Esophagus squamous epithelium (tissue), 5 donors: ENCODE measurements at regions of chr22 and their contacts with region 1.

Region 1: DNA sequence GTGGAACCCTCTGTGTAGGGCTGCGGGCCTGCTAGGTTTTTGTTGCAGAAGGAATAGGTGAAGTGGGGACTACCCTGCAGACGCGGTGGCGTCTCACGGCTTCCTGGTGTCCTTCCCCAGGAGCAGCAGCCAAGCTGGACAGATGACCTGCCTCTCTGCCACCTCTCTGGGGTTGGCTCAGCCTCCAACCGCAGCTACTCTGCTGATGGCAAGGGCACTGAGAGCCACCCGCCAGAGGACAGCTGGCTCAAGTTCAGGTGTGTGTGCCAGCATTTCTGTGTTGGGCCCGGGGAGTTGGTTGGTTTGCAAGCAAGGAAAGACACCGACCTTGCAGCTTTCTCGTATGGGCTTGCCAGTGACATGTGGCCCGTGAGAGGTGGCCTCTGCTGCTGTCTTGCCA is 15.3 kb downstream of the TAB1 start:
- DNase-seq: no peak
- H3K4me3 ChIP-seq: no peak overlapping the region
- H3K27ac ChIP-seq: no peak overlapping the region
- H3K4me1 ChIP-seq: peaks cover 4 to 32% (median 4%) of the 10 kb centered on the region in 3 donors
- H3K27me3 ChIP-seq: no peaks in the 10 kb centered on the region
- CTCF ChIP-seq: no peak
- POLR2A ChIP-seq: no peak

Region 2: GRCh38 chr22:39946503-39947219 is 531.8 kb after region 1 on chr22:
- intact Hi-C with region 1: no loop called
- DNase-seq: no peak
- H3K4me3 ChIP-seq: no peak overlapping the region
- H3K27ac ChIP-seq: peak overlapping the region in 1 of 4 donors; percentile 21
- H3K4me1 ChIP-seq: peaks cover 0 to 8% (median 0%) of the 10 kb centered on the region in 3 donors
- H3K27me3 ChIP-seq: peaks cover 0 to 4% (median 0%) of the 10 kb centered on the region in 4 donors
- CTCF ChIP-seq: no peak
- POLR2A ChIP-seq: no peak

Region 3: DNA sequence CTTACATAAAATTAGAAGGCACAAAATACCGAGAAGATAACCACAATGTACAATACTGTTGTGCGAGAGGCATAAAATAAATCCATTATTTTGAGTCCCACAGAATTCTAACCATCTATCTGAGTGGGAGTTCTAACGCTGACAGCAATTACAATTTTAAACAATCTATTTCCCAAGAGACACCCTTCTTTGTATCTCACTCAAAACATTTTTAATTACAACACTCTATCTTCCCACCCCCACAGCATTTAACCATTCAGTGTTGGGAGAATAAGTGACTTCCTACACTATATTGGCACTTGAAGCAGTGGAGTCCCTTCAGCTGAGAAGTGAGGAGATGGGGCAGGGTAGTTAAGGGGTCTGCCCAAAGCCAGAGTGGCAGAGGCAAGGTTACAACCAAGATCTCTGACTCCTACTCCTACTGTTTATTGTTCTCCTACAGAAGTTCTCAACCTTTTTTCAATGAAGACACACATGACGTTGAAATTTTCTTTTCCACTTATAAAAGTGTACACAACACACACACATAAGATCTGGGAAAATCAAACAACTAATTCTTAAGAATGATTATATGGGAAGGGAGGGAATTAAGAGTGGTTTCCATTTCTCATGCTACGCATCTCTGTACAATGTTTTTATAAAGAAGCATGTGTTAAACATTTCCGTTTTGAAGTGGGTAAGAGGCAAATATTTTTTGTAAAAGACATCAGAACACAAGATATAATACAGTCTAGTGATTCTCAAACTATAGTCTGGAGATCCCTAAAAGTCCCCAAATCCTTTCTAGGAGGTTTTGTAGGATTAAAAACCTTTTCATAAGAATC is 1393.3 kb after region 1 on chr22:
- intact Hi-C with region 1: loop called (anchors 10 kb)
- DNase-seq: no peak
- H3K4me3 ChIP-seq: no peak overlapping the region
- H3K27ac ChIP-seq: no peak overlapping the region
- H3K4me1 ChIP-seq: peaks cover 0 to 3% (median 0%) of the 10 kb centered on the region in 3 donors
- H3K27me3 ChIP-seq: no peaks in the 10 kb centered on the region
- CTCF ChIP-seq: no peak
- POLR2A ChIP-seq: no peak